A549 (cell line): ENCODE measurements at regions of chr9 and their contacts with region 1.

Region 1: DNA sequence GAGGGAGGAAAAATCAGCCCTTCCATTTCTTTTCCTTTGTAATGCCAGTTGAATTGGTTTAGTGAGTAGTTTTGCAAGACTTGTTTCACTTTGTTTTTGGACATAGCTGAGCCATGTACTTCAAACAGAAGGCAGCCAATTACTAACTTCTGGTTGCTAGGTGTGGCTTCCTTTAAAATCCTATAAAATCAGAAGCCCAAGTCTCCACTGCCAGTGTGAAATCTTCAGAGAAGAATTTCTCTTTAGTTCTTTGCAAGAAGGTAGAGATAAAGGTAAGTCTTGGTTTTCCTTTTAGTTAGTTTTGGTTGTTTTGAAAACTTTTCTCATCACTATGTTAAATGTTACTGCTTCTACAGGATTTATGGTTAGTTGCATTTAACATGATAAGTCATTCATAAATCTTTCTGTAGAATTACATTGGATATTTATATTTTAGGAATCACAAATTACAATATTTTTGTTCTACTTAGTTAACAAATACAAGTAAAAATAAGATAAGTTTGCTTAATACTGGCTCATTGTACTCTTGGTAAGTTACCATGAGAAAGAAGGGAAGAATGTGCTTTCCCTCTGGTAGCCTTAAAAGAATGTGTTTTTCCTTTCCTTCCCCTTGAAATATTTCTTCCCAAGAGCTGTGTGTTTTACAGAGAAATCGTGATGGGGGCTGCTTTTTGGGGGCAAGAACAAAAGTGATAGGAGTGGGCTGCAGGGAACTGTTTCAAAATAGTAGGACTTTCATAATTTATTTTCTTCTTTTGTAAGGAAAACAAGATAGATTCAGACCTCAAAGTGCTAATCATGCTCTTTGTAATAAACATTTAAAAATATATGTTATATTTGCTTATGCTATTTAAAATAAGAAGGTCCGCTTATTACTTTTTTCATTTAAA is at the start of gene ANXA1:
- DNase-seq: peak; percentile 75 to 94
- ATAC-seq: peak; percentile 72 to 81
- H3K4me3 ChIP-seq: peak within 1 kb of the TSS; percentile 62
- H3K27ac ChIP-seq: peak within 1 kb of the TSS; percentile 89 to 94
- H3K4me1 ChIP-seq: peaks cover 45% of the 10 kb centered on the region
- CTCF ChIP-seq: no peak
- EP300 ChIP-seq: no peak
- POLR2A ChIP-seq: no peak
- RAD21 ChIP-seq: peak in 1 of 2 experiments; percentile 3; a peak in 1 of 5 replicates
- polyA plus RNA-seq, gene ANXA1: 1,630 and 1,990 TPM in 2 replicates

Region 2: DNA sequence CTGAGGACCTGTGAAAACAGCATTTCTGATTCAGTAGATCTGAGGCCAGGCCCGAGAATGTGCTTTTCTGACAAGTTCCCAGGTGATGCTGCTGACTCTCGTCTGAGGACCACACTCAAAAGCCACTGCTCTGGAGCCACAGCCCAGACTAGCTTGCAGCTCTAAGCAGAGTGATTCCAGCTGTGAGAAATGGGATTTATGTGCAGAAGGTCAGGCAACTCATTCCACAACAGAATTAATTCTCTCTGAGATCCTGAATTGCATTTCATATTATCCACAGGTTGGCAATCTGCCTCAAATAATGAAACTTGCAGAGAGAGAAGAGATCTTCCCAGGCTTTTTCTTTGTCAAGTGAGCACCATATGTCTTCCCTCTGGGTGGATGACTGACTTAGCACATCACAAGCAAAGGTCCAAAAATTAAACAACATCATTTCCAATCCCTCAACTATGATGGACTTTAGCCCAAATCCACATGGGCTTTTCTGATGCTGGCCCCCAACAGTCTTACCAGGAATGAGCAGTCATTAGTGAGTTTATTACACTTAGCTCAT is 339.3 kb before region 1 on chr9:
- CTCF ChIA-PET with region 1: no interaction called
- POLR2A ChIA-PET with region 1: no interaction called
- DNase-seq: no peak
- ATAC-seq: no peak
- H3K4me3 ChIP-seq: no peak overlapping the region
- H3K27ac ChIP-seq: no peak overlapping the region
- H3K4me1 ChIP-seq: 0 out of 3 replicates have a peak, but pooled peaks cover 4% of the 10 kb centered on the region
- CTCF ChIP-seq: no peak
- EP300 ChIP-seq: no peak
- POLR2A ChIP-seq: no peak
- RAD21 ChIP-seq: no peak

Region 3: GRCh38 chr9:73132034-73132776 is 19.7 kb before region 1 on chr9:
- CTCF ChIA-PET with region 1: interaction called, 5 read pairs
- POLR2A ChIA-PET with region 1: interaction called, 43 read pairs
- DNase-seq: peak in 1 of 2 experiments; percentile 86
- ATAC-seq: peak; percentile 83
- H3K4me3 ChIP-seq: peak overlapping the region; percentile 40
- H3K27ac ChIP-seq: peak overlapping the region; percentile 81 to 90
- H3K4me1 ChIP-seq: peaks cover 47% of the 10 kb centered on the region
- CTCF ChIP-seq: no peak
- EP300 ChIP-seq: no peak
- POLR2A ChIP-seq: no peak
- RAD21 ChIP-seq: no peak; a peak in 1 of 5 replicates

Region 4: GRCh38 chr9:73137286-73137899 is 14.5 kb before region 1 on chr9:
- CTCF ChIA-PET with region 1: interaction called, 5 read pairs
- POLR2A ChIA-PET with region 1: interaction called, 43 read pairs
- DNase-seq: peak in 1 of 2 experiments; percentile 88
- ATAC-seq: peak; percentile 87 to 89
- H3K4me3 ChIP-seq: peak overlapping the region; percentile 27; the same call in 2 of the 3 replicates
- H3K27ac ChIP-seq: peak overlapping the region; percentile 77 to 81
- H3K4me1 ChIP-seq: peaks cover 62% of the 10 kb centered on the region
- CTCF ChIP-seq: peak; percentile 21; the same call in 1 of the 3 replicates
- EP300 ChIP-seq: no peak; a peak in 1 of 5 replicates
- POLR2A ChIP-seq: no peak
- RAD21 ChIP-seq: peak in 1 of 2 experiments; percentile 47; a peak in 3 of 5 replicates